CD8-positive, alpha-beta T cell (primary cell): ENCODE measurements at regions of chr4 and their contacts with region 1.

Region 1: GRCh38 chr4:158253350-158253980 is 43.2 kb downstream of the TMEM144 start:
- DNase-seq: peak in 5 of 9 experiments; percentile 23 to 56 (median 32)
- ATAC-seq: no peak
- H3K4me3 ChIP-seq: no peak overlapping the region
- H3K4me3 Mint-ChIP-seq: no peak overlapping the region
- H3K27ac ChIP-seq: no peak overlapping the region
- H3K27ac Mint-ChIP-seq: no peak overlapping the region
- H3K4me1 ChIP-seq: peaks cover 8% of the 10 kb centered on the region
- H3K4me1 Mint-ChIP-seq: peaks cover 8% of the 10 kb centered on the region
- H3K27me3 ChIP-seq: no peaks in the 10 kb centered on the region
- H3K27me3 Mint-ChIP-seq: peaks cover 5% of the 10 kb centered on the region
- CTCF ChIP-seq: peak; percentile 46

Region 2: DNA sequence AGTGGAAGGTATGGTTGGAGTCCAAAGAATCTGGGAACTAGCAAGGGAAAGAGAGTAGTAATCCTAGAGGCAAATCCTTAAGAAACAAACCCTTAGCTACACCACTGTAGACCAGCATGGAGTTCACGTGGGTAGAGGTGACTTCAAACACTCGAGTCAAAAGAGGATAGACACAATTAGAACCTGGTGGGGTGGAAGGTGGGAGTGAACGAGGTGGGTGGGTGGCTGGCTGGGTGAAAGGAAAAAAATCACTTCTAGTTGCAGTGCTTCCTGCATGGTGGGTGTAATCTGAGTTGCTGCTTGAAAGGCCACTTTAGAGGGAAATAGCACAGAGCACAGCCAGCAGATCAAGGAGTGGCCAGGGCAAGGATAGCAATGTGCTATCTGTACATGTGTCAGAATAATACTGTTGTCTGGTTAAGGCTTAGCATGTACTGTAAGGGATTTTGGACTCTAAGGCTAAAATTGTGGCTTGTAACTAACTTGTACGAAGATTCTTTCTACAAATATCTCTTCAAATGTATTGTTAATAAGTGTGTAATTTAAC is 676.7 kb before region 1 on chr4:
- CTCF ChIA-PET with region 1: no interaction called
- POLR2A ChIA-PET with region 1: no interaction called
- intact Hi-C with region 1: no loop called
- DNase-seq: no peak
- ATAC-seq: no peak
- H3K4me3 ChIP-seq: no peak overlapping the region
- H3K4me3 Mint-ChIP-seq: no peak overlapping the region
- H3K27ac ChIP-seq: no peak overlapping the region
- H3K27ac Mint-ChIP-seq: no peak overlapping the region
- H3K4me1 ChIP-seq: no peaks in the 10 kb centered on the region
- H3K4me1 Mint-ChIP-seq: no peaks in the 10 kb centered on the region
- H3K27me3 ChIP-seq: no peaks in the 10 kb centered on the region
- H3K27me3 Mint-ChIP-seq: no peaks in the 10 kb centered on the region
- CTCF ChIP-seq: no peak

Region 3: GRCh38 chr4:158015240-158015639 is 238.2 kb before region 1 on chr4:
- CTCF ChIA-PET with region 1: no interaction called
- POLR2A ChIA-PET with region 1: no interaction called
- intact Hi-C with region 1: no loop called
- DNase-seq: no peak
- ATAC-seq: no peak
- H3K4me3 ChIP-seq: no peak overlapping the region
- H3K4me3 Mint-ChIP-seq: no peak overlapping the region
- H3K27ac ChIP-seq: no peak overlapping the region
- H3K27ac Mint-ChIP-seq: no peak overlapping the region
- H3K4me1 ChIP-seq: no peaks in the 10 kb centered on the region
- H3K4me1 Mint-ChIP-seq: no peaks in the 10 kb centered on the region
- H3K27me3 ChIP-seq: no peaks in the 10 kb centered on the region
- H3K27me3 Mint-ChIP-seq: no peaks in the 10 kb centered on the region
- CTCF ChIP-seq: no peak

Region 4: DNA sequence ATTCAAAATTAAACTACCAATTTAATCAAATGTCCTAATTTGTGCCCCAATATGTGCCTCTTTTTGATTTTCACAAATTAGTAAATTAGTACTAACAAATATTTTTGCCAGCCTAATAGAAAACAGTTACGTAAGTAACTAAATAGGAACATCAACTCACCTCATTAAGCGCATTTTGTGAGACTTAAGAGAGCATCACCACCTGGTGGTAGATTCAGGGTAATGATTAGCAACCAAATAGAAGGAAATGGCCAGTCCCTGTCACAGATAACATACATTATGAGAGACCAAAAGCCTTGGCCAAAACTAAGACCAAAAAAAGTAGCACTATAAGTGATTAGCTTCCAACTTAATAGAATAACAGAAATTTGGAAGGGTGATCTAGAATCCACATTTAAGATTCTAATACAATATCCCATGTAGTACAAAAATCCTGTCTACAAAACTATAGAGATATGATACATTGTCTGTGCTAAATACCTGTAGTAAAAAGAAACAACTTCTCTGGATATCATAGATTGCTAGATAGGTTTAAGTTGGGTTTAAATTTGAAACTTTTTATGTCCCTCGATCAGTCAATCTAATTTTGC is 371.5 kb after region 1 on chr4:
- CTCF ChIA-PET with region 1: no interaction called
- POLR2A ChIA-PET with region 1: no interaction called
- intact Hi-C with region 1: loop called (anchors 10 kb)
- DNase-seq: peak in 2 of 9 experiments; percentile 31 to 42
- ATAC-seq: no peak
- H3K4me3 ChIP-seq: no peak overlapping the region
- H3K4me3 Mint-ChIP-seq: no peak overlapping the region
- H3K27ac ChIP-seq: no peak overlapping the region
- H3K27ac Mint-ChIP-seq: no peak overlapping the region
- H3K4me1 ChIP-seq: no peaks in the 10 kb centered on the region
- H3K4me1 Mint-ChIP-seq: no peaks in the 10 kb centered on the region
- H3K27me3 ChIP-seq: no peaks in the 10 kb centered on the region
- H3K27me3 Mint-ChIP-seq: peaks cover 11% of the 10 kb centered on the region
- CTCF ChIP-seq: peak; percentile 44

Region 5: GRCh38 chr4:158850800-158851644 is 597.6 kb after region 1 on chr4:
- CTCF ChIA-PET with region 1: no interaction called
- POLR2A ChIA-PET with region 1: no interaction called
- intact Hi-C with region 1: loop called in 1 of 2 experiments (anchors 2 kb)
- DNase-seq: peak in 2 of 9 experiments; percentile 38 to 55
- ATAC-seq: peak; percentile 38
- H3K4me3 ChIP-seq: no peak overlapping the region
- H3K4me3 Mint-ChIP-seq: no peak overlapping the region
- H3K27ac ChIP-seq: no peak overlapping the region
- H3K27ac Mint-ChIP-seq: no peak overlapping the region
- H3K4me1 ChIP-seq: no peaks in the 10 kb centered on the region
- H3K4me1 Mint-ChIP-seq: peaks cover 5% of the 10 kb centered on the region
- H3K27me3 ChIP-seq: no peaks in the 10 kb centered on the region
- H3K27me3 Mint-ChIP-seq: no peaks in the 10 kb centered on the region
- CTCF ChIP-seq: peak; percentile 74

Region 6: DNA sequence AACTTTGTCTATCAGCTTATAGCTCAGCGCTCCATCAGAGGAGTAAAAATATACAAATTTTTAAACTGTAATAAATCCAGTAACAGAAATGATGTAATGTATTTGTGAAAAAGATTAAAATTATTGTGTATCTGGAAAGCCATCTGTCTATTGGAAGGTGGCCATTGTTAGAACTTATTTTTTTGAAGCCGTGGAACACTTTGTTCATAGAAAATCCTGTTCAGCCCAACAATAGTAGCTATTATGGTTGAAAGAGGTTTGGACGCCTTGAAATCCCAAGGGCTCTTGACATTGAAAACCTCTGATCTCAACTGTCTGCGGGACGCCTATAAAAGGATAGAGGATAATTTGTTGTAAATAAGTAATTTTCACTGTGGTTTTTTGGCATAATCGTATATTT is 947.7 kb after region 1 on chr4:
- CTCF ChIA-PET with region 1: no interaction called
- POLR2A ChIA-PET with region 1: no interaction called
- intact Hi-C with region 1: loop called (anchors 2 to 5 kb)
- DNase-seq: no peak
- ATAC-seq: no peak
- H3K4me3 ChIP-seq: no peak overlapping the region
- H3K4me3 Mint-ChIP-seq: no peak overlapping the region
- H3K27ac ChIP-seq: no peak overlapping the region
- H3K27ac Mint-ChIP-seq: no peak overlapping the region
- H3K4me1 ChIP-seq: no peaks in the 10 kb centered on the region
- H3K4me1 Mint-ChIP-seq: peaks cover 12% of the 10 kb centered on the region
- H3K27me3 ChIP-seq: no peaks in the 10 kb centered on the region
- H3K27me3 Mint-ChIP-seq: no peaks in the 10 kb centered on the region
- CTCF ChIP-seq: no peak

Region 7: GRCh38 chr4:159206427-159206871 is 953.0 kb after region 1 on chr4:
- CTCF ChIA-PET with region 1: no interaction called
- POLR2A ChIA-PET with region 1: no interaction called
- intact Hi-C with region 1: loop called (anchors 2 to 5 kb)
- DNase-seq: peak in 1 of 9 experiments; percentile 41
- ATAC-seq: peak; percentile 36
- H3K4me3 ChIP-seq: no peak overlapping the region
- H3K4me3 Mint-ChIP-seq: no peak overlapping the region
- H3K27ac ChIP-seq: no peak overlapping the region
- H3K27ac Mint-ChIP-seq: no peak overlapping the region
- H3K4me1 ChIP-seq: no peaks in the 10 kb centered on the region
- H3K4me1 Mint-ChIP-seq: peaks cover 18% of the 10 kb centered on the region
- H3K27me3 ChIP-seq: no peaks in the 10 kb centered on the region
- H3K27me3 Mint-ChIP-seq: no peaks in the 10 kb centered on the region
- CTCF ChIP-seq: no peak

Region 8: GRCh38 chr4:159446266-159446976 is 1193.0 kb after region 1 on chr4:
- CTCF ChIA-PET with region 1: no interaction called
- POLR2A ChIA-PET with region 1: no interaction called
- intact Hi-C with region 1: loop called (anchors 5 to 10 kb)
- DNase-seq: peak in 2 of 9 experiments; percentile 17 to 32
- ATAC-seq: no peak
- H3K4me3 ChIP-seq: no peak overlapping the region
- H3K4me3 Mint-ChIP-seq: no peak overlapping the region
- H3K27ac ChIP-seq: no peak overlapping the region
- H3K27ac Mint-ChIP-seq: no peak overlapping the region
- H3K4me1 ChIP-seq: no peaks in the 10 kb centered on the region
- H3K4me1 Mint-ChIP-seq: no peaks in the 10 kb centered on the region
- H3K27me3 ChIP-seq: no peaks in the 10 kb centered on the region
- H3K27me3 Mint-ChIP-seq: peaks cover 11% of the 10 kb centered on the region
- CTCF ChIP-seq: peak; percentile 26